PC-9 (cell line): ENCODE measurements at regions of chr17 and their contacts with region 1.

Region 1: DNA sequence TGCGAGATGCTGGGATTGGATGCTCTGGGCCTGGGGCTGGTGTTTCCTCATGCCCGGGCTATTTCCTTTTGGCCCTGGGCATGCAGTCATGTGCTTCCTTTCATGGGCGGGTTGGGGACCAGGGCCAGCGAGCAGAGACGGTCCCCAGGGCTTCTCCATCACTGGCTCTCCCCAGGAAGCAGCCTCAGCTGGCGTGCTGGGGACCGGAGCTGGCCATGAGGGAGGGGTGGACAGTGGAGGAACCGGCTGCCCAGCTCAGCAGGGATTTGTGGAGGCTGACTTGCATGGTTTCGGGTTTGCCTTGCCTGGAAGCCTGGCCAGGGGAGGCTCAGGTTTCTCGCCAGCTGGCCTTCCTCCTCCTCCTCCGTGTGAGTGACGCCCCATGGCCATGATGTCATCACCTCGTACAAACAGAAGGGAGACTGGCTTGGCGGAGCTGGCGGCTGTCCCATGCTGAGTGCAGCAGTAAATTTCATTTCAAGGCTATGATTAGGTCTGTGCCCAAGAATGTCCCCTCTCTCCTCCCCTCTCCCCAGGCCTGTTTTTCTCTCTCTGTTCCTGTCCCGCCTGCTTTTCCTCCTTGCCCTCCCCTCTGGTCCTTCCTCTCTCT is 8.9 kb upstream of the TIMP2 start:
- DNase-seq: peak; percentile 82 to 92
- H3K4me3 ChIP-seq: peak overlapping the region; percentile 21; the same call in 1 of the 2 replicates
- H3K27ac ChIP-seq: peak overlapping the region; percentile 87
- H3K4me1 ChIP-seq: peaks cover 27% of the 10 kb centered on the region
- H3K27me3 ChIP-seq: no peaks in the 10 kb centered on the region
- CTCF ChIP-seq: no peak

Region 2: DNA sequence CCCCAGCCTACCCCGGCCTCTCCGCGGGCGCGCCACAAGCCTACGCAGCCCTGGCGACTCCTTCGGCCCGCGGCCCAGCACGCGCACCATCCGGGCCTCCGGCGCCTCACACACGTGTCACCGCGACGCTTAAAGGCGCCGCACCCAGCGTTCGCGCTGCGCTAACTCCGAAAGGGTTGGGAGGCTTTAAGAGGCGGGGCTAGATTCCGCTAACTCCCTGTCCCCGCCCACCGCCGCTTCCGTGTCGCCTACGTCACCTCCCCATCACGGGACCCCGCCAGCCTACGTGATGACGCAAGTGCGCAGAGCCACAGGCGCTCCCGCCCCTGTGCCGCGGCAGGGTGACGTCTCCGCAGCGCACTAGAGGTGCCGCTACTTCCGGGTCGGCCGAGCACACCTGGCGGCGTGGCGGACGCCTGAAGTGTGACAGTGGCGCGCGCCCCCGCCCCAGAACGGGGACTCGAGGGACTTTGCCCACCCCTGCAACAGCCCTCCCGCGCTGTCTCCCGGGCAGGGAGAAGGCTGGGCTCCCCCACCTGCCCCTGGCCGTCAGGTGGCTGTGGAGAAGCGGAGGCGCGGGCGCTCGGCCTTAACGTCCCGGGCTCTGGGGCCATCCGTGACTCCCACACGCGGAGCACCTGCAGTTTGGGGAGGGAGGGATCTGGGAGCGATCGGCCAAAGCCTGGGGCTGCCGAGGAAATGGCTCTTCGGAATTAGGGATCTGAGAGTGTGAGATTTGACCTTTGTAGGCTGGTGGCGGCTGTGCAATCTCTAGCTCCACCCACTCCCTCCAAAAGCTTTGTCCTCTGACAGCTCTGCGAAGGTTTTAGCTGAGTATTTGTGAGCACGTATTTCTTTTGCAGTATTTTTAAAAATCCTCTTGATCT is 93.1 kb before region 1 on chr17 and contains the start of gene USP36:
- CTCF ChIA-PET with region 1: no interaction called
- POLR2A ChIA-PET with region 1: no interaction called
- intact Hi-C with region 1: loop called (anchors 1 kb)
- DNase-seq: peak; percentile 89 to 99
- H3K4me3 ChIP-seq: peak within 1 kb of the TSS; percentile 95
- H3K27ac ChIP-seq: peak within 1 kb of the TSS; percentile 85
- H3K4me1 ChIP-seq: peaks cover 13% of the 10 kb centered on the region
- H3K27me3 ChIP-seq: no peaks in the 10 kb centered on the region
- CTCF ChIP-seq: no peak
- total RNA-seq, gene USP36: 41.4 and 46.2 TPM in 2 replicates

Region 3: DNA sequence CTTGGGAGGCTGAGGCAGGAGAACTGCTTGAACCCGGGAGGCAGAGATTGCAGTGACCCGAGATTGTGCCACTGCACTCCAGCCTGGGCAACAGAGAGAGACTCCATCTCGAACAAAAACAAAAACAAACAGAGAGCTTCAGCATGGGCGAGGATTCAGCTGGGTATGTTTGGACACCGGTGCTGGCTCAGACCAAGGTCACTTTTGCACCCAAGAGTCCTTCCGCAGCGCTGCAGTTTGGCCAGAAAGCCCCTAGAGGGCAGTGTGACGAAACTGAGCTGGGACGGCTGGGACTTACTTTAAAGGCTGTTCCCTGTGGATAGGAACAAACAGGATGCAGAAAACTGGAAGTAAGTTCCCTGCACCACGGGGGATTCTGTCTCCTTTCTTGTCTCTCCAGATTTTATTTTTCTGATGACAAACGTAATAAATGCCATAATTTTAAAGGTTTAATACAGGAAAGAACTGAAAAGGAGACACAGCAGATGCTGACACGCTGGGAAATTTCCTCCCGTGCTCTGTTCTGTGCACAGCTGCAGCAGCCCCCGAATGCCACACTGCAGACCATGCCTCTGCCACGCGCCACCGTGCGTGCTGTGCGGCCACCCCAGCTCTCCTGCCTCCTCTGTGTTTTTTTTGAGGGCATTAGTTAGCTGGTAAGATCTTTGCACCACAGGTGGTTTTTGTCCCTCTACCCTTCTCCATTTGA is 68.2 kb before region 1 on chr17:
- CTCF ChIA-PET with region 1: interaction called, 7 read pairs
- POLR2A ChIA-PET with region 1: no interaction called
- intact Hi-C with region 1: loop called (anchors 2 kb)
- DNase-seq: peak; percentile 57 to 78
- H3K4me3 ChIP-seq: no peak overlapping the region
- H3K27ac ChIP-seq: no peak overlapping the region
- H3K4me1 ChIP-seq: peaks cover 14% of the 10 kb centered on the region
- H3K27me3 ChIP-seq: no peaks in the 10 kb centered on the region
- CTCF ChIP-seq: peak; percentile 85

Region 4: GRCh38 chr17:78883164-78884122 is 50.6 kb before region 1 on chr17:
- CTCF ChIA-PET with region 1: no interaction called
- POLR2A ChIA-PET with region 1: no interaction called
- intact Hi-C with region 1: loop called (anchors 5 kb)
- DNase-seq: peak; percentile 90 to 94
- H3K4me3 ChIP-seq: peak overlapping the region; percentile 39; the same call in 1 of the 2 replicates
- H3K27ac ChIP-seq: peak overlapping the region; percentile 93
- H3K4me1 ChIP-seq: peaks cover 48% of the 10 kb centered on the region
- H3K27me3 ChIP-seq: no peaks in the 10 kb centered on the region
- CTCF ChIP-seq: no peak

Region 5: GRCh38 chr17:78905116-78905515 is 28.9 kb before region 1 on chr17:
- CTCF ChIA-PET with region 1: no interaction called
- POLR2A ChIA-PET with region 1: interaction called, 14 read pairs
- intact Hi-C with region 1: no loop called
- DNase-seq: no peak
- H3K4me3 ChIP-seq: no peak overlapping the region
- H3K27ac ChIP-seq: no peak overlapping the region
- H3K4me1 ChIP-seq: 0 out of 2 replicates have a peak, but pooled peaks cover under 1% of the 10 kb centered on the region
- H3K27me3 ChIP-seq: no peaks in the 10 kb centered on the region
- CTCF ChIP-seq: no peak

Region 6: GRCh38 chr17:78957128-78957527 is 23.1 kb after region 1 on chr17:
- CTCF ChIA-PET with region 1: interaction called, 3 read pairs
- POLR2A ChIA-PET with region 1: interaction called, 4 read pairs
- intact Hi-C with region 1: loop called (anchors 1 kb)
- DNase-seq: peak in 1 of 2 experiments; percentile 37
- H3K4me3 ChIP-seq: no peak overlapping the region
- H3K27ac ChIP-seq: no peak overlapping the region
- H3K4me1 ChIP-seq: peaks cover 50% of the 10 kb centered on the region
- H3K27me3 ChIP-seq: no peaks in the 10 kb centered on the region
- CTCF ChIP-seq: no peak

Region 7: DNA sequence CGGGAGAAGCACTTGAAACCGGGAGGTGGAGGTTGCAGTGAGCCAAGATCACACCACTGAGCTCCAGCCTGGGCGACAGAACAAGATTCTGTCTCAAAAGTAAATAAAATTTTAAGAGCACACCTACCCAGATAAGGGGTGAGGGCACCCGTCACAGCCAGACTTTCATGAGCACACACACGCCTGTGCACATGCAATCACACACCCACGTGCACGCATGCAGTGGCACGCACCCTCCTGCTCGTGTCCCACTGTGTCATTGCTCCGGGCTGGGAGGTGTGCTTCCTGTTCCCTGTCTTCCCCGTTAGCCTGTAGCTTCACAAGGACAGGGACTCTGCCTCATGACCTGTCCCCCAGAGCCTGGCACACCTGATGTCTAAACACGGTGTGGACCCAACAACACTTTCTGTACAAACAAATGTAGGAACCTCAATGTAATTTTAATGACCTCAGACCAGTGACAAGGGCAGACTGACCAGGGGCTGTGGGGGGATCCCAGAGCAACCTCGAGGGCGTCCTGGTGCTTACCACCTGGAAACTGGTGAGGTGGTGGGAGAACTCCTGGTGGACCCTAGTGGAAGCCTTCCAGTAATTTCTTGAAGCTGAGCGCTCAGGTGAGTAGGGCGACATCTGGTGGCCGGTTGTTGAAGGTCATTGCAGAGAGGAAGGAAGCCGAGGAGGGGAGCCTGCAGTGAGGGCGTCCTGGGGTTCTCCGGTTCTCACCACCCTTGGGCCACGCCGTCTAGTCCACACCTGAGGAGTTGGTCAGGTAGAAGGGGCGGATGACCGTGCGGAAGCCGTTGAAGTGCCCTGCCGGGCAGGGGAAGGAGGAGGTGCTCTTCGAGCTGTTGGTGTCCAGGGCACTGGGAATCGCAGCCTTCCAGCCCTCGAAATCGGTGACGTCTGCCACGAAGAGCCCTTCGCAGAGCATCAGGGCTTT is 37.0 kb after region 1 on chr17:
- CTCF ChIA-PET with region 1: no interaction called
- POLR2A ChIA-PET with region 1: no interaction called
- intact Hi-C with region 1: loop called (anchors 5 kb)
- DNase-seq: peak in 1 of 2 experiments; percentile 71
- H3K4me3 ChIP-seq: no peak overlapping the region
- H3K27ac ChIP-seq: no peak overlapping the region
- H3K4me1 ChIP-seq: no peaks in the 10 kb centered on the region
- H3K27me3 ChIP-seq: no peaks in the 10 kb centered on the region
- CTCF ChIP-seq: peak; percentile 86